Activated CD4-positive, alpha-beta memory T cell treated with anti-CD3 and anti-CD28 coated beads for 36 hours (primary cell): ENCODE measurements at regions of chr2 and their contacts with region 1.

Region 1: GRCh38 chr2:198326431-198326830 is 522.0 kb downstream of the PLCL1 start:
- DNase-seq: no peak
- H3K4me3 Mint-ChIP-seq: no peak overlapping the region
- H3K27ac Mint-ChIP-seq: no peak overlapping the region
- H3K4me1 Mint-ChIP-seq: peaks cover 21% of the 10 kb centered on the region
- H3K27me3 Mint-ChIP-seq: peaks cover 18% of the 10 kb centered on the region

Region 2: DNA sequence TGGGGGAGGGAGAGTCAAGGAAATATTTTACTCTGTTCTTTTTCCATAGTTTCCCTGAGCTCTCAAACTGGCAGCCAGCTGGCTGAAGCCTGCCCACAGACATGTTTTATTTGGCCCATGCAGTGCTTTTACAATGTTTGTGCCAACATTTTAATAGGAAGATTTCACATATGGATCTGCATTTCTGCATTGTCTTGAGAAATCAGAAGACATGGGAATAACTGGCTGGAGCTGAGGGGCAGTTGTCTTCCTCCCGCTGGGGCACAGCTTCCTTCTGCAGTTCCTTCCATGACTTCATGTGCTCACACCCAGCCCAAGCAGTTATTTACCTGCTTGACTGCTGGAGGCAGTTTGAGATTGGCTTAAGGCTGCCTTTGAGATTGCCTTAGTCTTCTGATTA is 447.6 kb before region 1 on chr2:
- CTCF ChIA-PET with region 1: no interaction called
- POLR2A ChIA-PET with region 1: no interaction called
- intact Hi-C with region 1: no loop called
- DNase-seq: no peak
- H3K4me3 Mint-ChIP-seq: no peak overlapping the region
- H3K27ac Mint-ChIP-seq: no peak overlapping the region
- H3K4me1 Mint-ChIP-seq: peaks cover 11% of the 10 kb centered on the region
- H3K27me3 Mint-ChIP-seq: no peaks in the 10 kb centered on the region

Region 3: DNA sequence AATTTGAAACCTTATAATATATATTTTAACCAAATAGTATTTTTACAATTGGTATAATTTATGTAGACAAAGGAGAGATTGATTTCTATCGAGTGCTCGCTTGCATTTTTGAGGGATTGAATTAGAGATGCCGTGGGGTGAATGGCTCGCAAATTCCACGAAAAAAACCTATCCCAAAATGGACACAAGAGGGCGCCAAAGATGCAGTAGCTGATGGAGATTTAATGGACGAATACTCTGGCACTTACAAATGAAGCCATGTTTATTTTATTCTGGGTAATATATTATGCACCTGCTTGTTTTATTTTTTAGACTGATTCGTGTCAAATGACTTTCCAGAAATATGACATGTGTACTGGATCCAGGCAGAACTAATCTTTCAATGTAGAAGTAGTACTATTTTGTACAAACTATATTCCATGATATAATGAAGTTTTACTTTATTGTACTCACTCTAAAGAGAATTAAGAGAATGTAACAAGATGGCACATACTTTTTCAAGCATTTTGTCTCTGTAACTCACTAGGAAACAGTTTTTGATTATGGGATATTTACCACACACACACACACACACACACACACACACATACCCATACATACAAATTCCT is 16.7 kb before region 1 on chr2:
- CTCF ChIA-PET with region 1: interaction called, 10 read pairs
- POLR2A ChIA-PET with region 1: no interaction called
- intact Hi-C with region 1: no loop called
- DNase-seq: peak; percentile 65
- H3K4me3 Mint-ChIP-seq: no peak overlapping the region
- H3K27ac Mint-ChIP-seq: no peak overlapping the region
- H3K4me1 Mint-ChIP-seq: no peaks in the 10 kb centered on the region
- H3K27me3 Mint-ChIP-seq: peaks cover 21% of the 10 kb centered on the region

Region 4: DNA sequence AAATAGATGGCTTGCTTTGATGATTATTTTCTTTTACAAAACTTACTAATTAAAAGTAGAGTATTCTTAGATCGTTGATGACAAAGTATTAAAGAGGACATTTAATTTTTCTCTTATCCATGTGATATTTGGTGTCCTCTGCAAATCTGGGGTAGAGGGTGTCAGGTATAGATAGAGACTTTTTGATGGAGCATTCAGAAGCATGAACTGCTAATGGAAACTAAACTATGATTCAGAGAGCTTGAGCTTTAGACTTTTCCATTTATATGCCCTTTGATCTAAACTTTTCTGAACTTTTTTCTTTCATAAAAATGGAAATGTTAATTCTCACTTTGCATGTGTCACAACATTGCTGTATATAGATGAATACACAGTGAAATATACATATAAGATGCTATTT is 97.7 kb after region 1 on chr2:
- CTCF ChIA-PET with region 1: no interaction called
- POLR2A ChIA-PET with region 1: no interaction called
- intact Hi-C with region 1: no loop called
- DNase-seq: no peak
- H3K4me3 Mint-ChIP-seq: no peak overlapping the region
- H3K27ac Mint-ChIP-seq: no peak overlapping the region
- H3K4me1 Mint-ChIP-seq: peaks cover 2% of the 10 kb centered on the region
- H3K27me3 Mint-ChIP-seq: peaks cover 2% of the 10 kb centered on the region